ENCODE measurements at regions of chr1 and their contacts with region 1.

Region 1: GRCh38 chr1:175373786-175374623 is 181.4 kb upstream of the KIAA0040 start:
- DNase-seq: peak in 2 of 3 donors; percentile 59 to 62
- ATAC-seq: peak; percentile 56 to 64
- H3K4me3 ChIP-seq: no peak overlapping the region
- H3K27ac ChIP-seq: no peak overlapping the region
- H3K4me1 ChIP-seq: no peaks in the 10 kb centered on the region
- H3K27me3 ChIP-seq: no peaks in the 10 kb centered on the region

Region 2: DNA sequence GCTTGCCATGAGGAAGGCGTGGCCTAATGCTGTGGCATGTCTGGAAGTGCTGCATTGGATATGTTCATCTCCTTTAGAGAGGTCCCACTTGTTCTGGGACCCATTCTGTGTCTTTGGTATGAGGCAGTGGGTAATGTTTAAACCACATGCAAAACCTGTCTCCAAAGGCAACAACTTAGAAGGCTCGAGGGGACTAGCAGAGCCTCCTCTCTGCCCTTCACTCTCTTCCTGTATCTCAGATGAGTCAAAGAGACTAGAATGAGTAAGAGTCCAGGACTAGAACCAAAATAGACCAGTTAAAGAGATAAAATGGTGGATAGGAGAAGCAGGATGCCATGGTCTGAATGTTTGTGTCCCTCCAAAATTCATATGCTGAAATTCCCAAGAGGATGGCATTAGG is 39.4 kb after region 1 on chr1:
- intact Hi-C with region 1: no loop called
- DNase-seq: no peak
- ATAC-seq: no peak
- H3K4me3 ChIP-seq: no peak overlapping the region
- H3K27ac ChIP-seq: no peak overlapping the region
- H3K4me1 ChIP-seq: no peaks in the 10 kb centered on the region
- H3K27me3 ChIP-seq: no peaks in the 10 kb centered on the region

Region 3: GRCh38 chr1:175423605-175424004 is 49.6 kb after region 1 on chr1:
- intact Hi-C with region 1: no loop called
- DNase-seq: no peak
- ATAC-seq: no peak
- H3K4me3 ChIP-seq: no peak overlapping the region
- H3K27ac ChIP-seq: no peak overlapping the region
- H3K4me1 ChIP-seq: no peaks in the 10 kb centered on the region
- H3K27me3 ChIP-seq: peaks cover 4% of the 10 kb centered on the region

Region 4: DNA sequence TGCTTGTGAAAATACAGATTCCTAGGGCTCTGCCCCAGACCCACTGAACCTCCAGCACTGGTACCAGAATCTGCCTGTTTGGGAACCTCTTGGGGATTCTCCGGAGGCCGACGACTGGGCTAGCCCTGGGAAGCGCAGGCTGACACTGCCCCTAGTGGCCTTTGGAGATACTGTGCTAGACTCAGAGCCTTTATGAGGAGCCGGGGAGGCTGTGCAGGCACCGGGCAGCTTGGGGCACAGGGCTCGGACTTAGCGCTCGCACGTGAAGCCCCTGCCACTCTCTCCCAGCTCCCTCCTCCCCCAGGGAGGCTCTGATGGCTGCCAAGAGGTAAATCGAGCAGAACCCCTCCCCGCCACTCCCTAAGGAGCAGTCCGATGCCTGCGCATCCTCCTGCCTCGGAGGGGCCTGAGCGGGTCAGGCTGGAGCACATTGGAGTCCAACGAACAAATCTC is 514.0 kb after region 1 on chr1:
- intact Hi-C with region 1: loop called in 1 of 4 experiments (anchors 10 kb)
- DNase-seq: peak; percentile 64 to 78 (median 74)
- ATAC-seq: peak; percentile 88 to 91
- H3K4me3 ChIP-seq: no peak overlapping the region
- H3K27ac ChIP-seq: no peak overlapping the region
- H3K4me1 ChIP-seq: no peaks in the 10 kb centered on the region
- H3K27me3 ChIP-seq: no peaks in the 10 kb centered on the region

Region 5: GRCh38 chr1:176073524-176074157 is 699.6 kb after region 1 on chr1:
- intact Hi-C with region 1: loop called in 2 of 4 experiments (anchors 10 kb)
- DNase-seq: no peak
- ATAC-seq: peak; percentile 54 to 76
- H3K4me3 ChIP-seq: no peak overlapping the region
- H3K27ac ChIP-seq: no peak overlapping the region
- H3K4me1 ChIP-seq: no peaks in the 10 kb centered on the region
- H3K27me3 ChIP-seq: no peaks in the 10 kb centered on the region

Measured in right cardiac atrium (tissue), 5 donors.